ENCODE measurements at regions of chr5 and their contacts with region 1.

Region 1: DNA sequence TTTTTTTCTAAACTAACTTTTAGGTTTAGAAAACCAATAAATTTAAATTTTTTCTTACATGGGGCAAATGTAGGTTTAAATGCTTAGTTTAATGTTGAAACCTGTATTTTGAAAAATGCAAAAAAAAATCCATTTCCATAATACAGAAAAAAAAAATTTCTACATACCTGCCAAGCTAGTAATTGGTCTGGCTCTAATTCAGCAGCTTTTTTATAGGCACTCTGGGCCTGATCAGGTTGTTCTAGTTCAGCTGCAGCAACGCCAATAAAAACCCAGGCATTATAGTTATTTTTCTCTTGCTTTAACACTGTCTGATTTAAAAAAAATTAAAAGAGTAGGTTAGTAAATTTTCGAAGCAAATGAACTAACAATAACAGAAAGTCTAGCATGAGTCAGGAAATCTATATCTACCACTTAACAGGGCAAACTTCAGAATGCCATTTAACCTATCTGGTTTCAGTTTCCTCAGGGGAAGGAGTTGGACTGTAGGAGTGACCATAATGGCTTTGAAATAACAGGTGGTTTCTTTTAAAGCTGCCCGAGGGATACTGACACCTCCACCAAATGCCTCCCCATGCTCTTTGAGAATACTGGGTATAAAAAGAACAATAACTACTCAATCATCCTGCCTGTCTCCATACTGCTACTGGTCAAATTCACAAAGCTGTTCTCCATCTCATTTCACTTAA is 11.6 kb downstream of the SKIC3 start:
- DNase-seq: no peak
- H3K4me3 ChIP-seq: no peak overlapping the region
- H3K27me3 ChIP-seq: no peaks in the 10 kb centered on the region
- CTCF ChIP-seq: no peak

Region 2: GRCh38 chr5:95526871-95527270 is 16.3 kb before region 1 on chr5:
- CTCF ChIA-PET with region 1: no interaction called
- POLR2A ChIA-PET with region 1: interaction called, 10 read pairs
- DNase-seq: no peak
- H3K4me3 ChIP-seq: no peak overlapping the region
- H3K27me3 ChIP-seq: no peaks in the 10 kb centered on the region
- CTCF ChIP-seq: no peak

Region 3: DNA sequence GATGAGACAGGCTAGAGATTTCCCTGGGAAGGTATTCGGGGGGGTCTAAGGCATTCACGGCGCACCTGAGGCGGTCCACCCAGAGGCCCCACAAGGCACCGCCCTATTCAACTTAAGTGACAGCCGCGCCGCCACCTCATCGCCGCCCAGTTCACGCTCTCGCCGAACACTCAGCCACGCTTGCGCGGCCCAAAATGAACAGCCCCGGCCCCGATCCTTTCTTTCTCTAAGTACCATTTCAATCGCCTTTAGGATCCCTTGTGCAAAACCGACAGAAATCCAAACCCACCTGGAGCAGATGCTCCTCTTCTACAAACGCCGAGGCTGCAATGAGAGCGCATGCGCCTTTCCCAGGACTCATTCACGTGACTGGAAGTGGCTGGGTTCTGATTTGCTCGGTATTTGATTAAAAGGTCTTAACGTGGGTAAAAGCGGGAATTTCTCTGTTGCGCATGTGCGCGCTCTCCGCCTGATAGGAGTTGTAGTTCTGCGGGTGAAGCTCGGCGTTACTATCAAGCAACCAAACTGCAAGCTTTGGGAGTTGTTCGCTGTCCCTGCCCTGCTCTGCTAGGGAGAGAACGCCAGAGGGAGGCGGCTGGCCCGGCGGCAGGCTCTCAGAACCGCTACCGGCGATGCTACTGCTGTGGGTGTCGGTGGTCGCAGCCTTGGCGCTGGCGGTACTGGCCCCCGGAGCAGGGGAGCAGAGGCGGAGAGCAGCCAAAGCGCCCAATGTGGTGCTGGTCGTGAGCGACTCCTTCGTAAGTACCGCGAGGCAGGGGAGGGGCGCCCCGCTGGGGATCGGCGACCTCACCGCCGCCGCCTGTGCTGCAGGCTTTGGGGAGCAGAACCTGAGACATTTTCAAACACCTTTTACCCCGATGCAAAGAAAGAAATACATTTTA is 11.7 kb after region 1 on chr5 and contains the starts of genes ARSK and SKIC3:
- CTCF ChIA-PET with region 1: no interaction called
- POLR2A ChIA-PET with region 1: no interaction called
- DNase-seq: peak; percentile 98
- H3K4me3 ChIP-seq: peak within 1 kb of the TSS; percentile 73
- H3K27me3 ChIP-seq: no peaks in the 10 kb centered on the region
- CTCF ChIP-seq: peak; percentile 71
- polyA plus RNA-seq, gene ARSK: 8.0 and 14.2 TPM in 2 replicates
- polyA plus RNA-seq, gene SKIC3: 31.6 and 66.3 TPM in 2 replicates

Measured in BJ (cell line).